Stomach (tissue), 19 donors: ENCODE measurements at regions of chr14 and their contacts with region 1.

Region 1: DNA sequence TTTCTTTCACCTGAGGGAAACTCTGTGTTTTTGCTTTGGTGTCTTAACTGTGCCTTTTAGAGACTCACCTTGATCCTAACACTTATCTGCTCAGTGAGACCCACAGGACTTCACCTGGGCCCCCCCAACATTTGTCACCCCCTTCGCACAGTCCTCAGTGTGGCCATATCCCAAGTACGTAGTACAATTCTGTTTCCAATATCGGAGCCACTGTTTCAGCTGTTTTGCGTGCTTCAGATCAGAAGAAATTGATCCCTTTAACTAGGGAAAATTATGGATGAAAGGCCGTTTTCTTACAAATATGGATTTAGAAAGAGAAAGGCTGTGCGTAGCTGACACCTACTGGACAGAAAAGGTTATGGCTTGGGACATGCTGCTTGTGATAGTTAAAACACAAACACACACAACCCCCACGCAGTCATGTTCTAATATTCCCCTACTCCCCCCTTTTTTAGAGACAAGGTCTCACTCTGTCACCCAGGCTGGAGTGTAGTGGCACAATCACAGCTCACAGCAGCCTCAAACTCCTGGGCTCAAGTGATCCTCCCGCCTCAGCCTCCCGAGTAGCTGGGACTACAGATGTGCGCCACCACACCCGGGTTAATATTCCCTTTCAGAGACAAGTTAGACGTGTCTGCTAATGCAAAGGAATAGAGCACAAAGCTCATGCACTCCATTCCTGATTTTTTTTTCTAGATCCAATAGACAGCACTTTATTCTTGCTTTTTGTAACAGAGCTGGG is 3.6 kb upstream of the SLC7A8 start:
- DNase-seq: peak; percentile 46 to 88
- H3K4me3 ChIP-seq: no peak overlapping the region
- H3K27ac ChIP-seq: no peak overlapping the region
- H3K4me1 ChIP-seq: peaks cover 3 to 24% (median 8%) of the 10 kb centered on the region in 4 donors
- H3K27me3 ChIP-seq: no peaks in the 10 kb centered on the region
- CTCF ChIP-seq: peak in 5 of 7 experiments; percentile 71 to 94 (median 81)
- EP300 ChIP-seq: no peak
- POLR2A ChIP-seq: no peak

Region 2: DNA sequence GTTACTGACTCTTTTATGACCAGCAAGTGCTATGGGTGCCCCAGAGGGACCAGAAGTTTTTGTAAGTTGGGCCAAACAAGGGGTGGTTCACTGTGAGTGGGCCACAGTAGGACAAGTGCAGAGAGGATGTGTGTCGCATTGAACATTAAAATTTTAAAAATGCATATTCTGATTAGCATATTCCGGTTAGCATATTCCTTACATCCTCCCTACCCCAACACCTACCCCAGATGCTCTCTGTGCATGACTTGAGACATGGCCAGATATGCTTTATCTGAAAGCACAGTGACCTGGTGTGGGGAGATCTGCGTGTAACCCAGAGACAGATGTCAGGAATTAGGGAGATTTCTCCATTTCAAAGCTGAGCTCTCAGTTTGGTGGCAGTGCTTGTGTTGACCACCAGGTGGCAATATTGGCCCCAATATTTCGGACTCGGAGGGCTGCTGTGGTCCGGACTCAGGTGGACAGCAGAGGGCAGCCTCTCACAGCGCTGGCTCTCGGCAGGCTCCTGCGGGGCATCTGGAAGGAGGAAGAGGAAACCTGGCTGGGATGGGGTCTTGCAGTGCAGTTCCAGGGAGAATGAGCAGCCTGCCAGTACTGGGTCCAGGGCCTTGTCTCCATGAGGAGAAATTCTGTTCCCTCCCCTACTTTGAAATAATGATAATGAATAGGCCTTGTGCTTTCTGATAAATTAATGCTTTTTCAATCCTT is 66.4 kb before region 1 on chr14:
- intact Hi-C with region 1: loop called (anchors 5 kb)
- DNase-seq: peak; percentile 93 to 96
- H3K4me3 ChIP-seq: no peak overlapping the region
- H3K27ac ChIP-seq: peak overlapping the region in 4 of 5 donors; percentile 48 to 73 (median 58)
- H3K4me1 ChIP-seq: peaks cover 9 to 46% (median 21%) of the 10 kb centered on the region in 4 donors
- H3K27me3 ChIP-seq: peaks cover 0 to 23% (median 0%) of the 10 kb centered on the region in 3 donors
- CTCF ChIP-seq: peak in 6 of 7 experiments; percentile 96 to 100 (median 99)
- EP300 ChIP-seq: no peak
- POLR2A ChIP-seq: no peak

Region 3: GRCh38 chr14:23286020-23286905 is 99.2 kb after region 1 on chr14 and contains the start of gene HOMEZ:
- intact Hi-C with region 1: no loop called
- DNase-seq: peak; percentile 99 to 100
- H3K4me3 ChIP-seq: peak within 1 kb of the TSS; percentile 64 to 92 (median 74)
- H3K27ac ChIP-seq: peak within 1 kb of the TSS; percentile 87 to 97 (median 96)
- H3K4me1 ChIP-seq: peaks cover 11 to 35% (median 29%) of the 10 kb centered on the region in 4 donors
- H3K27me3 ChIP-seq: no peaks in the 10 kb centered on the region
- CTCF ChIP-seq: peak in 4 of 7 experiments; percentile 10 to 32 (median 19)
- EP300 ChIP-seq: no peak
- POLR2A ChIP-seq: peak in 2 of 4 donors; percentile 11 to 72
- total RNA-seq, gene HOMEZ: 5.1 to 103 (median 8.3) TPM